Dorsolateral prefrontal cortex (tissue), 120 donors: ENCODE measurements at regions of chr2 and their contacts with region 1.

Region 1: DNA sequence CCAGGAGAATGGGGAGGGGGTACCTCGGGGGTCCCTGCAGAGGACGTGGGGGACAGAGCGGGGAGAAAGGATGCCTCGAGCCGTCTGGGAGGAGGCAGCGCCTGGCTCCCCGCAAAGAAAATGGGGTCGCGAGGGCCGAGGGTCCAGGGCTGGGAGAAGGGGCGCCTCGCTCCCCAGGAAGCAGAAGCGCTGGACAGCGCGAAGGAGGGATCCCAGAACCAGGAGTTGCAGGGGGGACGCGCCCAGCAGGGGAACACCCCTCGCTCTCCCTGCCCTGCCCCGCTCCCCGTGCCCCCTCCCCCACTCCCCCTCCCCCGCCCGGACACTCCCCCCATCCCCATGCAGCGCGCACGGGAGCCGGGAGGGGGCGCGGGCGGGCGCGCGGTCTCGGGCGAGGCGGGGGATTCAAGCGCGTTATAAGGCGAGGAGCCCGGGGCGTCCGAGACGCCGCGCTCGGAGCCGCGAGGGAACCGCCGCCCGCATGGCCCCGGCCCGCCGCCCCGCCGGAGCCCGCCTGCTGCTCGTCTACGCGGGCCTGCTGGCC is at the start of gene ERFE:
- DNase-seq: peak in 1 of 10 donors; percentile 64
- H3K4me3 ChIP-seq: peak within 1 kb of the TSS in 37 of 59 donors; percentile 3 to 56 (median 31)
- H3K27ac ChIP-seq: no peak within 1 kb of the TSS
- H3K27me3 ChIP-seq: peaks cover 0 to 29% (median 4%) of the 10 kb centered on the region in 45 donors
- CTCF ChIP-seq: peak in 54 of 56 donors; percentile 15 to 66 (median 47)
- total RNA-seq, gene ERFE: 0.35 to 6.8 (median 2.2) TPM

Region 2: GRCh38 chr2:238106686-238107524 is 51.7 kb before region 1 on chr2:
- intact Hi-C with region 1: no loop called
- DNase-seq: peak in 5 of 10 donors; percentile 17 to 41 (median 39)
- H3K4me3 ChIP-seq: no peak overlapping the region
- H3K27ac ChIP-seq: no peak overlapping the region
- H3K27me3 ChIP-seq: no peaks in the 10 kb centered on the region
- CTCF ChIP-seq: peak in 3 of 56 donors; percentile 10 to 14 (median 11)

Region 3: GRCh38 chr2:238127317-238128200 is 31.0 kb before region 1 on chr2:
- intact Hi-C with region 1: no loop called
- DNase-seq: no peak
- H3K4me3 ChIP-seq: peak overlapping the region in 1 of 59 donors; percentile 12
- H3K27ac ChIP-seq: no peak overlapping the region
- H3K27me3 ChIP-seq: no peaks in the 10 kb centered on the region
- CTCF ChIP-seq: no peak

Region 4: DNA sequence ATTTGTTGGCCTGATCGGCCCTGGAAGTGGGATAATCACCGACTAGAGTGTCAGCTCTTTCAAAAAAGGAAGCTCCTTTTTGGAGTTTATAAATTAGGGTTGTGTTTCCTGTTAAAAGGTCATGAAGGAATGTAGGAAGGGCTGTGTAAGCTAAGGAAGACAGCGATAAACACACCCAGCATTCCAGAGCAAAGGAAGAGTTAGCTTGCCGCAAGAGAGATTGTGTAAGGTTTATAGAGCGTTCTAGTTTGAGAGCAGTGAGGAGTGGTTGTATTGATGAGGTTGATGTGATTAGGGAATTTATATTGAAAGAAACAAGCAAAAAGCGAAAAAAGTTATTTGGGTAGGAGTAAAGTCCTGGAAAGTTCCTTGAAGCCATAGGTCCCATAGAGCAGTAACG is 48.4 kb after region 1 on chr2:
- intact Hi-C with region 1: no loop called
- DNase-seq: no peak
- H3K4me3 ChIP-seq: no peak overlapping the region
- H3K27ac ChIP-seq: no peak overlapping the region
- H3K27me3 ChIP-seq: no peaks in the 10 kb centered on the region
- CTCF ChIP-seq: no peak

Region 5: GRCh38 chr2:238263204-238264071 is 104.8 kb after region 1 on chr2:
- intact Hi-C with region 1: loop called (anchors 2 to 5 kb)
- DNase-seq: peak; percentile 85 to 98 (median 94)
- H3K4me3 ChIP-seq: peak overlapping the region in 1 of 59 donors; percentile 7
- H3K27ac ChIP-seq: peak overlapping the region in 42 of 59 donors; percentile 1 to 78 (median 56)
- H3K27me3 ChIP-seq: no peaks in the 10 kb centered on the region
- CTCF ChIP-seq: peak; percentile 50 to 95 (median 88)